Adrenal gland (tissue), 19 donors: ENCODE measurements at regions of chr1 and their contacts with region 1.

Region 1: GRCh38 chr1:110619412-110620249 is 13.5 kb upstream of the KCNA2 start:
- DNase-seq: peak; percentile 69 to 91 (median 76)
- H3K4me3 ChIP-seq: peak overlapping the region in 1 of 4 donors; percentile 26
- H3K27ac ChIP-seq: no peak overlapping the region
- H3K4me1 ChIP-seq: no peaks in the 10 kb centered on the region
- H3K27me3 ChIP-seq: peaks cover 21% of the 10 kb centered on the region
- CTCF ChIP-seq: peak; percentile 76 to 90 (median 84)
- POLR2A ChIP-seq: no peak

Region 2: GRCh38 chr1:110118636-110119615 is 500.7 kb before region 1 on chr1:
- intact Hi-C with region 1: no loop called
- DNase-seq: no peak
- H3K4me3 ChIP-seq: no peak overlapping the region
- H3K27ac ChIP-seq: no peak overlapping the region
- H3K4me1 ChIP-seq: no peaks in the 10 kb centered on the region
- H3K27me3 ChIP-seq: no peaks in the 10 kb centered on the region
- CTCF ChIP-seq: no peak
- POLR2A ChIP-seq: no peak

Region 3: DNA sequence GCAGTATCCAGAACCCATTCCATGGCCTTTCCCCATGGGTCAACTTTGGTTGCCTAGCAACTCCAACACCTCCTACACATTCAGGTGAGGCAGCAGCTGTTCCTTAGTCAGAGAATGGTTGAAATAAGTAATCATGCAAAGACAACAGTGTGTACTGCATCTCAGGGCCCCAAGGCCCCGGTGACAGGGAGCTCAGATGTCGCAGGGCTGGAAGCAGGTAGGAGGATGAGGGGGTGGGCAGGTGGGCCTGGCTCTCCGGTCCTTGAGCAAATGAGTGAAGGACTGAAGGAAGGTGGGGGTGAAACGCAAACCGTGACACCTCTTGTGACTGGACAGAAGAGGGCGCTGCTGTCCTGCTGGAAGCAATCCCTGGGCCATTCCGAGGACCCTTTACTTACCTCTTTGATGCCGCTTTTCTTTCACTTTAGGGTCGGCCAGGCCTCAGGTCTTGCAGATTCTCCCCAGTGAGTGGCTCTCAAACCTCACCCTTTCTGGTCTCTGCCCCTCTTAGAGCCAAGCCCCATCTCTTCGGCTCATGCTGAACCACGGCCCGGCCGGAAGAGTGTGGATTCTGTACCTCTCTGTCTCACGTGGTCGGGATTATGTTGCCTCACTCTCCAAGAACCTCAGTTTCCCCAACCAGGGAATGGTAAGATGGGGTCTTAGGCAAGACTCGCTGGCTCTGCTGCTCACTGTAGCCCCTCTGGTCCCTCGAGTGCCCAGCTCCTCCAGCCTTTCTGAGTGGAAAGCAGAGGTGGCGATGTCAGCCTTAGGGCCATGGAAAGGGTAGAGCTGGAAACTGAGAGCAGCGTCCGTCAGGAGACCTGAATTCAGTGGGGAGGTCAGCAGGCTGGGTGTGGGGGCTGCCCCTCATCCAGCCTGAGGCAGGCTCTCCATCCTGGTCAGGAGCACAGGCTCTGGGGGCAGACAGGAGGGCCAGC is 95.0 kb before region 1 on chr1:
- intact Hi-C with region 1: loop called (anchors 5 to 10 kb)
- DNase-seq: peak; percentile 26 to 64 (median 35)
- H3K4me3 ChIP-seq: no peak overlapping the region
- H3K27ac ChIP-seq: no peak overlapping the region
- H3K4me1 ChIP-seq: no peaks in the 10 kb centered on the region
- H3K27me3 ChIP-seq: peaks cover 6% of the 10 kb centered on the region
- CTCF ChIP-seq: peak; percentile 26 to 70 (median 62)
- POLR2A ChIP-seq: no peak

Region 4: GRCh38 chr1:110554871-110555801 is 64.5 kb before region 1 on chr1:
- intact Hi-C with region 1: loop called (anchors 2 to 10 kb)
- DNase-seq: peak; percentile 47 to 66 (median 55)
- H3K4me3 ChIP-seq: peak overlapping the region in 1 of 4 donors; percentile 24
- H3K27ac ChIP-seq: no peak overlapping the region
- H3K4me1 ChIP-seq: peaks cover 0 to 9% of the 10 kb centered on the region in 2 donors
- H3K27me3 ChIP-seq: peaks cover 20% of the 10 kb centered on the region
- CTCF ChIP-seq: peak; percentile 52 to 75 (median 66)
- POLR2A ChIP-seq: no peak